ENCODE measurements at regions of chr10 and their contacts with region 1.

Region 1: DNA sequence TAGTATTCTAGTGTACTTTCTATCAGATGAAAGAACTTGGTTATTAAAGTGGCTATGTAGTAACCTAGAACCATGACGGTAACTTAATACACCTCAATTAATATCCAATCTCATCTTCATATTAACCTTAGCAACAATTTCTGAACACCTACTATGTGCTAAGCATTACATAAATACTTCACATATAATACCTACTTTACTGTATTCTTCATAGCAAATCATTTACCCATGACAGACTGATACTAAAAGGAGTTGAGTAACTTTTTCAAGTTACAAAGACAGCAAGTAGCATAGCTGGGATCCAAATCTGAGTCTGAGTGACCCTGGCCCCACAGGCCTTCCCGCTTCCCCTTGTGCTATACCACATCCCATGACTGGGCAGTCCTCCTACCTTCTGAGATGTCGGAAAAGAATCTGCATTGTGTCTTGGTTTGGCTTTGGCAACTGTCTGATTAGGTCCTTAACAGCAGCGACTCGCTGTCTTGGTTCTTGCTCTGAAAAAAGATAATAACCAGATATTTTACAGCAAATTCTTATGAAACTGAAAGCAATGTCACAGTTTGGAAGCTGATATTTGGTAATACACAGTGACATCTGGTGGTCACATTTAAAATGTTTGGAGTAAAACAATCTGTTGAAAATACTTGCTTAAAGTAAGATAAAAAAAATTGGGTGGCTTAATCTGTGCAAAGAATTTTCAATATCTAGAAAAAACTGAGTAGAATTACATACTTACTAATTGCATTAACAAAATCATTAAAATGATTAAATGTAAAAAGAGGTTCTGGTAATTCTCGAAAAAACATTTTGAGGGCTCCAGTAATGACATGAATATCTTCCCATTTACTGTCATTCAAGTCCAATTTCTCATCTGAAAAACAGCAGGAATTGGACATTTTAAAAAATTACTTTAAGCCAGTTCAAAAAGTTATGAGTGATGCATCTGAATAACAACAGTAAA is 120.1 kb downstream of the ARHGAP12 start:
- DNase-seq: peak in 29 of 42 donors; percentile 3 to 65 (median 25)

Region 2: GRCh38 chr10:30727524-30727923 is 1081.0 kb before region 1 on chr10:
- intact Hi-C with region 1: loop called (anchors 5 kb)
- DNase-seq: no peak

Region 3: DNA sequence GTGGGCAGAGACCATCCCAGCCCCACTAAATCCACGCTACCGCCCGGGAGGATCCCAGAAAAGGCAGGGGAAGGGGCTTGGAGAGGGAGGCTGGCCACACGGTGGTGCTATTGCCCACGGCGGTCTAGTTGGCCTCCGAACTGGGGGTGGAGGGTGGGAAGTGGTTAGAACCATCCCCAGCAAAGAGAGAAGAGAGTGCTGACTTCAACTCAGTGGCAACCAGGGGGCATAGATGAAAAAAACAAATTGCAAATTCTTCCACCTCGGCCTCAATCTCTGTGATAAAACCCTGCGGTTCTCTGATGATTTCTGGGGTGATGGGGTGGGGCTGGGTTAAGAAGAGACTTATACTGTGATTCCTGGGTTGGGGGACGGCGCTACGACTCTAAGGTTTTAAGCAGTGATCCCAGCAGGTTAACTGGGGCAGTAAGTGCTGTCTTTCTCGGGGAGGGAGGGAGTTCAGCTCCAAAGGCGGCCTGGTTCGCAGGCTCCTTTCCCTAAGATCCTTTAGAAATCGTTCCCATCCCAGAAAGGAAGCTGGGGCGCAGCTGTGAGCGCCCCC is 1024.5 kb before region 1 on chr10:
- intact Hi-C with region 1: loop called (anchors 5 kb)
- DNase-seq: peak; percentile 84 to 97 (median 92)

Region 4: DNA sequence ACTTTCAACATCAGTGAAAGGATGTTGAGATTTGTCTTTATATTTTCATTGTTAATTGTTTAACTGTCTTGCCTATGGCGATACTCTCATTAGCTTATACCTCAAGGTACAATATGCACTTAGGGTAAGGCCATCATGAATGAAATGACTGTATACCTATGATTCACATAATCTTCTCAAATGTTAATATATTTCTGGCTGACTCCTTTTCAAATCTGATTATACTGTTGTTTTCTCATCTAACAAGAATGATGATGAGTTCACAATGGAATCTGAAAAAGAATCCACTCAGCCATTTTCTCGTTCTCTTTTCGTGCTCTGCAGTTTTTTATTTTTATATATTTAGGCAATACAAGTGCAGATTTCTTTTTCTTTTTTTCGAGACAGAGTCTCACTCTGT is 39.0 kb before region 1 on chr10:
- intact Hi-C with region 1: loop called (anchors 5 kb)
- DNase-seq: no peak

Region 5: DNA sequence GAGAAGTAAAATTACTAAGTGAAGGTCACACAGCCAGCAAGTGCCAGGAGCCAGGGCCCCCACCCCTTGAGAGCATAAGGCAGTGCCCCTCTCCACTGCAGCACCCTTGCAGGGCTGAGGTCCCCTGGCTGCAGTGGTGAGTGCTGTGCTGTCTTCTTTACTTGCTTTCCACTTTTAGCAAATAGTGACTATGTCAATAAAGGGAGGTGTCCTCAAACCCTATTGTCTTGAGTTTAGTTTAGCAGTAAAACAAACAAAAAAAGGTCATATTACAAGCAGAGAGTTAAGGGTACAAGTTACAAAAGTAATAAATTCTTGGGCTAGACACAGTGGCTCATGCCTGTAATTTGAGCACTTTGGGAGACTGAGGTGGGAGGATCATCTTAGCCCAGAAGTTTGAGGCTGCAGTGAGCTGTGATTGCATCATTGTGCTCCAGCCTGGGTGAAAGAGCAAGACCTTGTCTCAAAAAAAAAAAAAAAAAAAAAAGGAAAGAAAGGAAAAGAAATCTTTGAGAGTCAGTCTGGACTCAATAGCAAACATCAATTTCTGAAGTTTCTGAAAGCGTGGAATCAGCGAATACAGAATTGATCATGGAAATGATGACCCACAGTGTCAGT is 286.7 kb after region 1 on chr10:
- intact Hi-C with region 1: no loop called
- DNase-seq: no peak

Measured in head of caudate nucleus (tissue), 42 donors.